Activated CD8-positive, alpha-beta T cell treated with anti-CD3 and anti-CD28 coated beads, Interleukin-2, amount 10 ng/mL, durations not matched to agents 7 days and 5 days (primary cell): ENCODE measurements at regions of chr3 and their contacts with region 1.

Region 1: GRCh38 chr3:187738331-187739093 is 6.8 kb downstream of the BCL6 start:
- DNase-seq: peak; percentile 84
- ATAC-seq: peak; percentile 24
- H3K4me3 Mint-ChIP-seq: peak overlapping the region; percentile 100
- H3K27ac Mint-ChIP-seq: peak overlapping the region; percentile 100
- H3K4me1 Mint-ChIP-seq: peaks cover 53% of the 10 kb centered on the region
- H3K27me3 Mint-ChIP-seq: no peaks in the 10 kb centered on the region

Region 2: GRCh38 chr3:187695449-187695848 is 43.1 kb before region 1 on chr3:
- CTCF ChIA-PET with region 1: no interaction called
- POLR2A ChIA-PET with region 1: no interaction called
- DNase-seq: no peak
- ATAC-seq: no peak
- H3K4me3 Mint-ChIP-seq: no peak overlapping the region
- H3K27ac Mint-ChIP-seq: no peak overlapping the region
- H3K4me1 Mint-ChIP-seq: no peaks in the 10 kb centered on the region
- H3K27me3 Mint-ChIP-seq: peaks cover 23% of the 10 kb centered on the region

Region 3: GRCh38 chr3:187714404-187714979 is 24.0 kb before region 1 on chr3:
- CTCF ChIA-PET with region 1: interaction called, 10 read pairs
- POLR2A ChIA-PET with region 1: no interaction called
- DNase-seq: peak; percentile 82
- ATAC-seq: peak; percentile 80
- H3K4me3 Mint-ChIP-seq: no peak overlapping the region
- H3K27ac Mint-ChIP-seq: no peak overlapping the region
- H3K4me1 Mint-ChIP-seq: peaks cover 13% of the 10 kb centered on the region
- H3K27me3 Mint-ChIP-seq: peaks cover 4% of the 10 kb centered on the region

Region 4: DNA sequence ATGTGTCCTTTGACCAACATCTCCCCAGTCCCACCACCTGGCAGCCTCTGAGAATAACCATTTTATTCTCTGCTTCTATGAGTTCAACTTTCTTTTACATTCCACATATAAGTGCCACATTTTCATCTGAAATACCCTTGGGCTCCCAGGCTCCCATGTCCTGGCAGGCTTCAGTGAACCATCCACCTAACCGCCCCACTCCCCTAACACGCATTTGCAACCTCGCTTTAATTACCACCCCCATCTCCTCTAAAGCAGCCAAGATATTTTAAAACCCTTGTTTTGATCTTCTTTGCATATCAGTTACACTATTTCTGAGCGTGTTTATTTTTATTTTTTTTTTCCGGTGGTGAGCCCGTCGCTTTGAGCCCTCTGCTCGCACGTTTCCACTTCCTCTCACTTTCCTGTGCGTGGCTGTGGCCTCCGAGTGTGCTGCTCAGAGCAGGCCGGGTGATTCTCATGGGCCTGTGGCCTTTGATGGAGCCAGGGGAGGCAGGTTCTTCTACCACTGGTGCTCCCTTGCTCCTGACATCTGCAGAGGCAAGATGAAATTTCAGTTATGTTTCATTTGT is 220.0 kb after region 1 on chr3:
- CTCF ChIA-PET with region 1: interaction called, 13 read pairs
- POLR2A ChIA-PET with region 1: interaction called, 4 read pairs
- DNase-seq: peak; percentile 78
- ATAC-seq: peak; percentile 95
- H3K4me3 Mint-ChIP-seq: peak overlapping the region; percentile 52
- H3K27ac Mint-ChIP-seq: peak overlapping the region; percentile 82
- H3K4me1 Mint-ChIP-seq: peaks cover 59% of the 10 kb centered on the region
- H3K27me3 Mint-ChIP-seq: no peaks in the 10 kb centered on the region

Region 5: GRCh38 chr3:188154014-188154808 is 415.7 kb after region 1 on chr3 and contains the start of gene LPP:
- CTCF ChIA-PET with region 1: interaction called, 41 read pairs
- POLR2A ChIA-PET with region 1: interaction called, 92 read pairs
- DNase-seq: peak; percentile 92
- ATAC-seq: peak; percentile 84
- H3K4me3 Mint-ChIP-seq: peak within 1 kb of the TSS; percentile 90
- H3K27ac Mint-ChIP-seq: peak within 1 kb of the TSS; percentile 88
- H3K4me1 Mint-ChIP-seq: peaks cover 60% of the 10 kb centered on the region
- H3K27me3 Mint-ChIP-seq: no peaks in the 10 kb centered on the region
- total RNA-seq, gene LPP: 51.3 to 58.9 TPM

Region 6: DNA sequence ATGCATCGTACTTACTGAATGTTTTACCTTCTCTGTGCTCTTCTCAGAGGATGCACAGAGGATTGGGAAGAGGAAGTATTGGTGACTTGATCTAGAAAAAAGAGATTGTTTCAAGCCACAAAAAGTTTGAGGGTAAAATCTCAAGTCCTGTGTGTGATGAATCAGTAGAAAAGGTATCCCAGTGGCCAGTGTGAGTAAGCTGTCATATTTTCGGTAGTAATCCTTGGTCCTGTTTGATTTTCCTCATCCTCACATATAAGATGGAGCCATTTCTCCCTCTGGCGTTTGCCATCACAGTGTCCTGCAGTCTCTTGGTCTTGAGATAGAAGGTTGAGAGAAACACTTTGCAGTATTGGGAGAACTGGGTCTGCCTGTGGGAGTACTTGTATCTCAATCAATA is 582.2 kb after region 1 on chr3:
- CTCF ChIA-PET with region 1: interaction called, 29 read pairs
- POLR2A ChIA-PET with region 1: no interaction called
- DNase-seq: no peak
- ATAC-seq: no peak
- H3K4me3 Mint-ChIP-seq: no peak overlapping the region
- H3K27ac Mint-ChIP-seq: no peak overlapping the region
- H3K4me1 Mint-ChIP-seq: peaks cover 48% of the 10 kb centered on the region
- H3K27me3 Mint-ChIP-seq: no peaks in the 10 kb centered on the region

Region 7: DNA sequence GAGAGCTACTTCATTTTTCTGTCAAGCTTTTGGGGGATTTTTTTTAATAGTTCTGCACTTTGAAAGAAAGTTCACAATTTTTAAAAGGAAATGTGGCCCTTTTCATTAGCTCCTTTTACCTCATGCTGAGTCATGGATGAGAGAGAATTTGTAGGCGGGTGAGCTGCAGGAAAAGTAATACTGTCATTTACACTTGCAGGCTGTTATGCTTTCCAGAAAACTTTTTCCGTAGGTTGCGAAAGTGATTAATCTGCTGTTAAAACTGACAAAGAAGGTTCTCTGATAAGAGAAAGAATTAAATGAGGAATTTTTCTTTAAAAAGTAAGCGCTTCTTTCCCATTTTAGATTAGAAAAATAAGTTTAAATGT is 845.6 kb after region 1 on chr3:
- CTCF ChIA-PET with region 1: interaction called, 26 read pairs
- POLR2A ChIA-PET with region 1: no interaction called
- DNase-seq: no peak
- ATAC-seq: no peak
- H3K4me3 Mint-ChIP-seq: no peak overlapping the region
- H3K27ac Mint-ChIP-seq: no peak overlapping the region
- H3K4me1 Mint-ChIP-seq: peaks cover 9% of the 10 kb centered on the region
- H3K27me3 Mint-ChIP-seq: no peaks in the 10 kb centered on the region

Region 8: DNA sequence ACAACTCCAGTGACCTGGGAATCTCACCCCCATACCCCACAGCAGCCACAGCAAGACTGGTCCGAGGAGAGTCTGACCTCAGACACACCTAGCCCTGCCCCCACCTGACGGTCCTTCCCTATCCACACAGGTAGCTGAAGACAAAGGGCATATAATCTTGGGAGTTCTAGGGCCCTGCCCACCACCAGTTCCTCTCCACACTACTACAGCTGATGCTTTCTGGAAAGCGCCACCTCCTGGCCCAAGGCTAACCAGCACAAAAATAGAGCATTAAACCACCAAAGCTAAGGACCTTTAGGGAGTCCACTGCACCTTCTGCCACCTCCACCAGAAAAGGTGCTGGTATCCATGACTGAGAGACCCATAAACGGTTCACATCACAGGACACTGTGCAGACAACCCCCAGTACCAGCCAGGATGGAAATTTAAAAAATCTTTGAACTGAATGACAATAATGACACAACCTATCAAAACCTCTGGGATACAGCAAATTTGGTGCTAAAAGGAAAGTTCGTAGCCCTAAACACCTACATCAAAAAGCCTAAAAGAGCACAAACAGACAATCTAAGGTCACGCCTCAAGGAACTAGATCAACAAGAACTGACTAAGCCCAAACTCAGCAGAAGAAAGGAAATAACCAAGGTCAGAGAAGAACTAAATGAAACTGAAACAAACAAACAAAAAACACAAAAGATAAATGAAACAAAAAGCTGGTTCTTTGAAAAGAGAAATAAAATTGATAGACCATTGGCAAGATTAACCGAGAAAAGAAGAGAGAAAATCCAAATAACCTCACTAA is 1311.1 kb after region 1 on chr3:
- CTCF ChIA-PET with region 1: interaction called, 27 read pairs
- POLR2A ChIA-PET with region 1: interaction called, 3 read pairs
- DNase-seq: no peak
- ATAC-seq: peak; percentile 61
- H3K4me3 Mint-ChIP-seq: peak overlapping the region; percentile 40
- H3K27ac Mint-ChIP-seq: peak overlapping the region; percentile 83
- H3K4me1 Mint-ChIP-seq: peaks cover 35% of the 10 kb centered on the region
- H3K27me3 Mint-ChIP-seq: no peaks in the 10 kb centered on the region